Mammary epithelial cell (primary cell): ENCODE measurements at regions of chr2 and their contacts with region 1.

Region 1: GRCh38 chr2:60852282-60852860 is 29.0 kb upstream of the REL start:
- DNase-seq: no peak
- H3K4me3 ChIP-seq: no peak overlapping the region
- H3K27ac ChIP-seq: no peak overlapping the region
- H3K4me1 ChIP-seq: peaks cover 9% of the 10 kb centered on the region
- H3K27me3 ChIP-seq: no peaks in the 10 kb centered on the region
- CTCF ChIP-seq: no peak

Region 2: DNA sequence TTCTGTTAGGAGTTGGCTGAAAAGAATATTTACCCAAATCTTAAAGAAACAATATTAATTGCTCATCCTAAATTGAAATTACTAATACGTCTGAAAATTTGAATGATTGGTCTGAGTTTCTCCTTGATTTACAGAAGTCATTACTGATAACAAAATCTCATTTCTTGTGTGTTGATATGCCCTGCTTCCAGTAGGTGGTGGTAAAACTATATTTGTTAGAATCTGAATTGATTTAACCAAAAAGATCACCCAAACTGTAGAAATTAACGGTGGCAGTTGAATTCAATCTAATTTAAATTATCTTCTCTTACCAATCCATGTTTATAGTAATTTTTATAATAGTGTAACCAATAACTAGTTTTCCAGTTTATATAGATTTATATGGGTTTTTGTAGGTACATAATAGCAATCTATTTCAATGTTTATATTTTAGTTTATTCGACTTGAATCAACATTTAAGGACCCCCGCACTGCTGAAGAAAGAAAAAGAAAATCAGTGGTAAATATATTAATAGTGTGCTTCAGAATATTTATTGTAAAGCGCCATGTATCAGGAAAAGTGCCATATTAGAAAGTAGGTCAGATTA is 58.0 kb before region 1 on chr2:
- CTCF ChIA-PET with region 1: no interaction called
- dilution Hi-C with region 1: loop called (anchors 5 kb)
- in situ Hi-C with region 1: no loop called
- intact Hi-C with region 1: no loop called
- DNase-seq: no peak
- H3K4me3 ChIP-seq: no peak overlapping the region
- H3K27ac ChIP-seq: no peak overlapping the region
- H3K4me1 ChIP-seq: no peaks in the 10 kb centered on the region
- H3K27me3 ChIP-seq: no peaks in the 10 kb centered on the region
- CTCF ChIP-seq: peak; percentile 36 to 49

Region 3: DNA sequence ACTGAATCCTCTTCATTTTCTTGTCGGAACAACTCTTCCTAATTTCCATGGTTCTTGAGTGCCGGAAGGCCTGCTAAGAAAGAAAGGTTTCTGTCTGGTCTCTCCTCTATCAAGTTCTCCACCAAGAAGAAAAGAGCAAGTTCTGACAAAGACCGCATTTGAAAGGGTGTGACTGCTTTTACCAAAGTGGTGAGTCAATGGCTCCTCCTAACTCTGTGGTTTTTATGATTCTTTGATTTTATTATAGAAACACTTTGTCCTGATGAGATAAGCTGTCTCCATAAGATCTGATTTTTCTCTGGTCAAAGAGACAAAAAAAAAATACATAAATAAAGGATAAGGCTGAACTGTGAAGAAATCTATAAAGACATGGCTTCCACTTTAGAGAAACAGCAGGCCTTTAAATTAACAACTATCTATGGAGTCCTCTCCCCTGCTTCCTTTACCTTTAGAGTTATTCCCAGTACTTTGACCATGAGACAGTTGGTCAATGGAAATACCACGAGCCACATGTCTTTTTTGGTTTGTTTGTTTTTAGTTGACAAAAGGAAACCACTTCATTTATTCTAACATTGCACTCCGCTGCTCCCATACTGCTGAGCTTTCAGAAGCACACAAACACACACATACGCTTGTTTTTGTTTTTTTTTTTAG is 96.7 kb after region 1 on chr2:
- CTCF ChIA-PET with region 1: no interaction called
- dilution Hi-C with region 1: no loop called
- in situ Hi-C with region 1: no loop called
- intact Hi-C with region 1: no loop called
- DNase-seq: peak; percentile 96
- H3K4me3 ChIP-seq: no peak overlapping the region
- H3K27ac ChIP-seq: peak overlapping the region; percentile 82
- H3K4me1 ChIP-seq: peaks cover 24% of the 10 kb centered on the region
- H3K27me3 ChIP-seq: no peaks in the 10 kb centered on the region
- CTCF ChIP-seq: no peak